ENCODE measurements at regions of chr1 and their contacts with region 1.

Region 1: GRCh38 chr1:33080885-33081553 is at the start of gene AZIN2:
- DNase-seq: peak; percentile 94
- ATAC-seq: peak; percentile 99
- H3K4me3 ChIP-seq: peak within 1 kb of the TSS; percentile 50 to 73 (median 63)
- H3K4me3 Mint-ChIP-seq: peak within 1 kb of the TSS; percentile 85
- H3K27ac ChIP-seq: no peak within 1 kb of the TSS
- H3K27ac Mint-ChIP-seq: peak within 1 kb of the TSS; percentile 47
- H3K4me1 ChIP-seq: peaks cover 14 to 19% of the 10 kb centered on the region in 2 donors
- H3K4me1 Mint-ChIP-seq: peaks cover 21% of the 10 kb centered on the region
- H3K27me3 ChIP-seq: peaks cover 0 to 12% (median 4%) of the 10 kb centered on the region in 4 experiments
- H3K27me3 Mint-ChIP-seq: peaks cover 7% of the 10 kb centered on the region
- CTCF ChIP-seq: no peak
- total RNA-seq, gene AZIN2: 5.4 and 5.9 TPM in 2 replicates

Region 2: DNA sequence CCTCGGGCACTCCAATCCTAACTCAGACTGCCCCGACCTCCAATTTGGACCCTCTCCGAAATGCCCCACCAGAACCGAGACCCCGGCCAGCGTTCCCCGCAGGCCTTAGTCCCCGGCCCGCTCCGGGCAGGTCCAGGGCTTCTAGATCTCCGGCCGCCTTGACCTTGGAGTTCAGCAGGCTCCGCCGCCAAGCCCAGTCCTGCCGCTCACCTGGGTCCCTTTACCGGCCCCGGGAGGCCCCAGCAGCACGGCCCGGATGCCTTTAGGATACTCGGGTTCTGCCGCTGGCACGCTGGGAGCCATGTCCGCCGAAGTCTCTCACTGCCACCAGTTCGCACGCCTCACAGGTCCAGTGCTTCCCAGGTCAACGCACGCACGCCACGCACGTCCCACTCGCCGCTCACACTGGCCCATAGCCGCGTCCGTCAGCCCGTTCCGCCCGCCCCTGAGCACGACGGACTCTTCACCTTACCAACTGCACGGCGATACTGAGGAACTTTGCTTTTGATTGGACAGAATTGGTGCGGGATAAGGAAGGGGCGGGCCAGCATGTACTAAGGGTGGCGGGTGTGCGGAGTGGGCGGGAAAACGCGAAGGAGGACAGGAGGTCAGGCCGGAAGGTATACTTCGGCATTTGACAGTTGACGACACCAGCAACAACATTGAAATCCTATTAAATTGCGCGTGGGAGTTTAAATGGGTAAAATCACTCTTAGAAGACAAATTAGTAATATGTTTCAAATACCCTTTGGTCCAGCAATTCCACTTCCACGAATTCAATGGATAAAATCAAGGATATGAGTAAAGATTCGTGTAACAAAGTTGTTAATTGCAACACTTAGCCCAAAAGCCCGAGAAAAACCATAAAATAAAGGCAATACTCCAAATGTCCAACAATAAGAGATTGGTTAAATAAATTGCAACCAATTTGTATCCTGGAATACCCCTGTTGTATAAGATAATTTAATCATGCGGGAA is 44.2 kb before region 1 on chr1 and contains the start of gene AK2:
- CTCF ChIA-PET with region 1: no interaction called
- POLR2A ChIA-PET with region 1: no interaction called
- intact Hi-C with region 1: loop called (anchors 2 kb)
- DNase-seq: peak; percentile 94
- ATAC-seq: peak; percentile 99
- H3K4me3 ChIP-seq: peak within 1 kb of the TSS; percentile 72 to 99 (median 77)
- H3K4me3 Mint-ChIP-seq: peak within 1 kb of the TSS; percentile 97
- H3K27ac ChIP-seq: peak within 1 kb of the TSS; percentile 42 to 78
- H3K27ac Mint-ChIP-seq: peak within 1 kb of the TSS; percentile 91
- H3K4me1 ChIP-seq: peaks cover 16 to 24% of the 10 kb centered on the region in 2 donors
- H3K4me1 Mint-ChIP-seq: peaks cover 45% of the 10 kb centered on the region
- H3K27me3 ChIP-seq: no peaks in the 10 kb centered on the region
- H3K27me3 Mint-ChIP-seq: no peaks in the 10 kb centered on the region
- CTCF ChIP-seq: no peak
- total RNA-seq, gene AK2: 104 and 109 TPM in 2 replicates